Heart left ventricle (tissue), 16 donors: ENCODE measurements at regions of chr6 and their contacts with region 1.

Region 1: GRCh38 chr6:118408863-118409262 is 139.2 kb upstream of the PLN start:
- DNase-seq: no peak
- ATAC-seq: no peak
- H3K4me3 ChIP-seq: no peak overlapping the region
- H3K27ac ChIP-seq: no peak overlapping the region
- H3K4me1 ChIP-seq: no peaks in the 10 kb centered on the region
- H3K27me3 ChIP-seq: no peaks in the 10 kb centered on the region
- CTCF ChIP-seq: no peak
- POLR2A ChIP-seq: no peak

Region 2: GRCh38 chr6:117938311-117938995 is 470.4 kb before region 1 on chr6:
- intact Hi-C with region 1: no loop called
- DNase-seq: no peak
- ATAC-seq: no peak
- H3K4me3 ChIP-seq: no peak overlapping the region
- H3K27ac ChIP-seq: no peak overlapping the region
- H3K4me1 ChIP-seq: no peaks in the 10 kb centered on the region
- H3K27me3 ChIP-seq: no peaks in the 10 kb centered on the region
- CTCF ChIP-seq: no peak
- POLR2A ChIP-seq: no peak

Region 3: DNA sequence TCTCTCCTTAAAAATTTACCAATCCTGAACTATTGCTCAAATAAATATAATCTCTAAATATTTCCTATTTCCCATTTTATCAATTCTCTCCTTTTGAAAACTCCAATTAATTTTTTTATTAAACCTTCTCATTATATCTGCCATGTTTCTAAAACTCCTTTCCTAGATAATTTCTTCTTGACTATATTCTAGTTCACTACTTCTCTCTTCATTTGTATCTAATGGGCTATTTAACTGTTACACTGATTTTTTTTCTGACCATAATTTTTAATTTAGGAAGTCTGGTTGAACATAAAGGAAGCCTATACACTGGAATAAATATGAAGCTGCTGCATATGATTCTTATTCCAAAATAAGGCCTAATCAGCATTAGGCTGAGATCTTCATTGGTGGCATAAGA is 43.0 kb after region 1 on chr6:
- intact Hi-C with region 1: loop called in 1 of 10 experiments (anchors 5 kb)
- DNase-seq: no peak
- ATAC-seq: no peak
- H3K4me3 ChIP-seq: no peak overlapping the region
- H3K27ac ChIP-seq: no peak overlapping the region
- H3K4me1 ChIP-seq: peaks cover 0 to 2% (median 0%) of the 10 kb centered on the region in 12 donors
- H3K27me3 ChIP-seq: no peaks in the 10 kb centered on the region
- CTCF ChIP-seq: no peak
- POLR2A ChIP-seq: no peak